PC-9 (cell line): ENCODE measurements at regions of chr19 and their contacts with region 1.

Region 1: DNA sequence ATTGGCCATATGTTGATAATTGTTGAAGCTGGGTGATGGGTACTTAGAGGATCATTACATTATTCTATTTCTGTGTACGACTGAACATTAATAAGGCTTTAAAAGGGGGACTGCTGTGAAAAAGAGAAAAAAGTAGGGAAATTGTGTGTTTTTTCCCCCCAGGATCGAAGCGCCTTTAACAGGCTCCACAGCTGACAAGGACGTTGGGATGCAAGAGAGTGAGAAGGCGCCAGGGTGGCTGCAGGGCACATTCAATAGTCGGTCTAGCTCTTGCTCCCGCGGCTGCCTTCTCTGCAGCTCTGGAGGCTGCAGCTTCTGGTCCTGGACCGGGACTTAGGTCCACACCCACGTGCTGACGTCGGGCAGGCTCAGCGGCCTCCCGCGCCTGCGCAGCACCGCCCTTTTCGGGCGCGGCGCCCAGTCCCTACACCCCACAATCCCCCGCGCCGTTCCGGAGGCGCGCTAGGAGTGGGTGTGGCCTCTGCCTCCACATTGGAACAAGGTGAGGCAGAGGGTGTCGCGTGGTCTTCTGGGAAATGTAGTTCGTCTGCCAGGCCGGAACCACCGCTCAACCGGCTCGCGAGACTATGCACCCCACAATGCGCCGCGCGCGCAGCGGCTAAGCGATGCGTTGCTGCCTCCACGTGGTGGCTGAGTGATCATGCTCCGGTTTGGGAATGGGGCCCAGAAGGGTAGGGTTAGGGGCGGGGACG is 4.9 kb upstream of the LRFN3 start:
- DNase-seq: peak; percentile 96 to 99
- H3K4me3 ChIP-seq: peak overlapping the region; percentile 55
- H3K27ac ChIP-seq: no peak overlapping the region
- H3K4me1 ChIP-seq: peaks cover 16% of the 10 kb centered on the region
- H3K27me3 ChIP-seq: peaks cover 13% of the 10 kb centered on the region
- CTCF ChIP-seq: peak; percentile 80

Region 2: GRCh38 chr19:35318650-35319448 is 612.5 kb before region 1 on chr19:
- CTCF ChIA-PET with region 1: no interaction called
- POLR2A ChIA-PET with region 1: no interaction called
- intact Hi-C with region 1: loop called (anchors 10 kb)
- DNase-seq: peak; percentile 98 to 99
- H3K4me3 ChIP-seq: peak overlapping the region; percentile 11; the same call in 1 of the 2 replicates
- H3K27ac ChIP-seq: peak overlapping the region; percentile 98
- H3K4me1 ChIP-seq: peaks cover 63% of the 10 kb centered on the region
- H3K27me3 ChIP-seq: no peaks in the 10 kb centered on the region
- CTCF ChIP-seq: no peak

Region 3: GRCh38 chr19:35693830-35694599 is 237.3 kb before region 1 on chr19:
- CTCF ChIA-PET with region 1: interaction called, 3 read pairs
- POLR2A ChIA-PET with region 1: no interaction called
- intact Hi-C with region 1: loop called (anchors 1 kb)
- DNase-seq: peak; percentile 69 to 84
- H3K4me3 ChIP-seq: no peak overlapping the region
- H3K27ac ChIP-seq: no peak overlapping the region
- H3K4me1 ChIP-seq: peaks cover 13% of the 10 kb centered on the region
- H3K27me3 ChIP-seq: no peaks in the 10 kb centered on the region
- CTCF ChIP-seq: peak; percentile 91

Region 4: DNA sequence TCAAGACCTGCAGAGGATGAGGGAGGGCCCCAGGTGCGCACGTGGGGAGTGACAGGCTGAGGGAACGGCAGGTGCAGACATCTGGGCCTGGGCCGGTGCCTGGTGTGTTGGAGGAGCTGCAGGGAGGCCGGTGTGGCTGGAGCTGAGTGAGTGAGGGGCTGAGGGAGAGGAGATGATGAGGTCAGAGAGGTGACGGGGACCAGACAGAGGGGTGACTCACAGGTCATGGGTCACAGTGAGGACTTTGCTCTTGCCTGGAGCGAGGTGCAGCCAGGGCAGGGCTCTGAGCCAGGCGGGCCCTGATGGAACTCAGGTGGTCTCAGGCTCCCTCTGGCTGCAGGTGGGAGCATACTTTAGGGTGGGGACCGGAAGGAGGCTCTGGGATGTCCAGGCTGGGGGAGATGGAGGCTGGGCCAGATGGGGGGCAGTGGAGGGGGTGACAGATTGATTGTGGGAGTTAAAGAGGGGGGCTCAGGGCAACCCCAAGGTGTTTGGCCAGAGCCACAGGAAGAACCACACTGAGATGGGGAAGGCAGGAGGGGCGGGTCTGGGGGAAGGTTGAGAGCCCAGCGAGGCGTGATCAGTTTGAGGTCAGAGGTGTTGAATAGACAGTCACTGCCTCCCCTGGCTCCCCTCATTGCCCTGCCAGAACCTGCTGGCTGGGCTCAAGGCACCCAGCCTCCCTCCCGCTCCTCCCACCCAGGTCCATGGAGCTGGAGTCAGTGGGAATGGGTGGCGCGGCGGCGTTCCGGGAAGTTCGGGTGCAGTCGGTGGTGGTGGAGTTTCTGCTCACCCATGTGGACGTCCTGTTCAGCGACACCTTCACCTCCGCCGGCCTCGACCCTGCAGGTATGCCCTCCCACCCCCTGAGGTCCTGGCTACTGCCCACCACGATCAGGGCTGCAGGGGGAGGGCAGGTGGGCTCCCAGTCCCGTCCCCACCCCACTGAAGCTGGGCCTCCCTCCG is 147.6 kb before region 1 on chr19:
- CTCF ChIA-PET with region 1: no interaction called
- POLR2A ChIA-PET with region 1: interaction called, 10 read pairs
- intact Hi-C with region 1: no loop called
- DNase-seq: no peak
- H3K4me3 ChIP-seq: no peak overlapping the region
- H3K27ac ChIP-seq: no peak overlapping the region
- H3K4me1 ChIP-seq: no peaks in the 10 kb centered on the region
- H3K27me3 ChIP-seq: peaks cover 12% of the 10 kb centered on the region
- CTCF ChIP-seq: no peak

Region 5: GRCh38 chr19:35899547-35900214 is 31.6 kb before region 1 on chr19:
- CTCF ChIA-PET with region 1: no interaction called
- POLR2A ChIA-PET with region 1: interaction called, 5 read pairs
- intact Hi-C with region 1: loop called (anchors 1 kb)
- DNase-seq: peak; percentile 62 to 74
- H3K4me3 ChIP-seq: peak overlapping the region; percentile 79
- H3K27ac ChIP-seq: peak overlapping the region; percentile 50
- H3K4me1 ChIP-seq: peaks cover 8% of the 10 kb centered on the region; the same call in 1 of the 2 replicates
- H3K27me3 ChIP-seq: no peaks in the 10 kb centered on the region
- CTCF ChIP-seq: no peak

Region 6: GRCh38 chr19:35963514-35963913 is 32.2 kb after region 1 on chr19:
- CTCF ChIA-PET with region 1: no interaction called
- POLR2A ChIA-PET with region 1: no interaction called
- intact Hi-C with region 1: no loop called
- DNase-seq: peak in 1 of 2 experiments; percentile 35
- H3K4me3 ChIP-seq: no peak overlapping the region
- H3K27ac ChIP-seq: no peak overlapping the region
- H3K4me1 ChIP-seq: no peaks in the 10 kb centered on the region
- H3K27me3 ChIP-seq: peaks cover 40% of the 10 kb centered on the region
- CTCF ChIP-seq: no peak